ENCODE measurements at regions of chr4 and their contacts with region 1.

Region 1: DNA sequence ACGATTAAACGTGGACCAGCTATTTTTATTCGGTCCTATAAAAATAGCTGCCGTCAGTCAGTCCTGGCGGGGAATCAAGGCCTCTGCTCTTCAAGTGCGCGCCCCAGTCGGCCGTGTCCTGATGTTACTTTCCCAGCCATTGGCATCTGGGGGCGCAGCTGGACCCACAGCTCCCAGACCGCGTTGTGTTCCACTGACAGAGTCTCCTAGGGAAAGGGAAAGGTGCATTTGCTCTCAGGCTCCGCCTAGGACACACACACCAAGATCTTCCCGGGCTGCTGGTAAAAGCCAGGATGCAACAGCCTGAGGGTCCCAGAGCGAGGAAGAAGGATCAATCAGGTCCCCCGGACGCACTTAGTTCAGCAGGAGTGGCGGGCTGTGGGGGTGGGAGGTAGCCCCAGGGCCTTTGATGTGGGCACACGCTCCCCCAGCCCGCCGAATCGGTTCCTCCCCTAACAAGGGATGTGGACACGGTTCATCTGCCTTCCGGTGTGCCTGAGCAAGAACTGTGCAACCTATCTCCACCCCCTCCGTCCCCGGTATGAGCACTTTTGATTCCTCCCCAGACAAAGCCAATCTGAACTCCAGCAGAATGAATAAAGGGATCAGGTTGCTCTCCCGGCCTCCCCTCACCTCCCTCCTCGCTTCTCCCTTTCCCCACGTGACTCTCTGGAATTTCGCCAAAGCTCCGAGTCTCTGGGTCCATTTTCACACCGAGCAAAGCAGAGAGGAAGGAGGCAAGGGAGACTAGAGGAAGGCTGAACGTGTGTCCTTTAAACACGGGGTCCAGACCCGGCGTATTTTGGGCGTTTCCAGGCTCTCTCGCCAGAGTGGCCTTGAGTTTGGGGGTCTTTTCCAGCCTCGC is 626 bp upstream of the FRAS1 start:
- DNase-seq: peak; percentile 64 to 78
- H3K4me3 ChIP-seq: peak overlapping the region; percentile 88
- H3K27ac ChIP-seq: no peak overlapping the region
- H3K4me1 ChIP-seq: no peaks in the 10 kb centered on the region
- H3K27me3 ChIP-seq: no peaks in the 10 kb centered on the region
- CTCF ChIP-seq: no peak

Region 2: GRCh38 chr4:78179123-78179522 is 122.6 kb after region 1 on chr4:
- CTCF ChIA-PET with region 1: interaction called, 8 read pairs
- POLR2A ChIA-PET with region 1: interaction called, 3 read pairs
- intact Hi-C with region 1: loop called (anchors 2 kb)
- DNase-seq: peak in 1 of 2 experiments; percentile 12
- H3K4me3 ChIP-seq: no peak overlapping the region
- H3K27ac ChIP-seq: no peak overlapping the region
- H3K4me1 ChIP-seq: peaks cover 26% of the 10 kb centered on the region
- H3K27me3 ChIP-seq: no peaks in the 10 kb centered on the region
- CTCF ChIP-seq: no peak

Region 3: GRCh38 chr4:78369679-78370078 is 313.2 kb after region 1 on chr4:
- CTCF ChIA-PET with region 1: no interaction called
- POLR2A ChIA-PET with region 1: no interaction called
- intact Hi-C with region 1: loop called (anchors 5 kb)
- DNase-seq: no peak
- H3K4me3 ChIP-seq: no peak overlapping the region
- H3K27ac ChIP-seq: no peak overlapping the region
- H3K4me1 ChIP-seq: peaks cover 27% of the 10 kb centered on the region
- H3K27me3 ChIP-seq: no peaks in the 10 kb centered on the region
- CTCF ChIP-seq: no peak

Region 4: GRCh38 chr4:78534286-78534955 is 477.9 kb after region 1 on chr4:
- CTCF ChIA-PET with region 1: interaction called, 3 read pairs
- POLR2A ChIA-PET with region 1: interaction called, 15 read pairs
- intact Hi-C with region 1: no loop called
- DNase-seq: peak; percentile 61 to 91
- H3K4me3 ChIP-seq: no peak overlapping the region
- H3K27ac ChIP-seq: peak overlapping the region; percentile 91
- H3K4me1 ChIP-seq: peaks cover 46% of the 10 kb centered on the region
- H3K27me3 ChIP-seq: no peaks in the 10 kb centered on the region
- CTCF ChIP-seq: no peak

Region 5: GRCh38 chr4:78569291-78569821 is 512.9 kb after region 1 on chr4:
- CTCF ChIA-PET with region 1: no interaction called
- POLR2A ChIA-PET with region 1: interaction called, 7 read pairs
- intact Hi-C with region 1: loop called (anchors 5 kb)
- DNase-seq: peak; percentile 39 to 94
- H3K4me3 ChIP-seq: 0 out of 2 replicates have a peak overlapping the region, but pooled peaks have one; percentile 25
- H3K27ac ChIP-seq: peak overlapping the region; percentile 79
- H3K4me1 ChIP-seq: peaks cover 62% of the 10 kb centered on the region
- H3K27me3 ChIP-seq: no peaks in the 10 kb centered on the region
- CTCF ChIP-seq: no peak

Measured in PC-9 (cell line).